Activated CD4-positive, alpha-beta T cell treated with anti-CD3 and anti-CD28 coated beads for 36 hours (primary cell): ENCODE measurements at regions of chr18 and their contacts with region 1.

Region 1: GRCh38 chr18:76803814-76804213 is 18.5 kb upstream of the ZNF236 start:
- DNase-seq: peak; percentile 83
- ATAC-seq: peak; percentile 79
- H3K4me3 Mint-ChIP-seq: no peak overlapping the region
- H3K27ac Mint-ChIP-seq: no peak overlapping the region
- H3K4me1 Mint-ChIP-seq: peaks cover 13% of the 10 kb centered on the region
- H3K27me3 Mint-ChIP-seq: peaks cover 4% of the 10 kb centered on the region

Region 2: DNA sequence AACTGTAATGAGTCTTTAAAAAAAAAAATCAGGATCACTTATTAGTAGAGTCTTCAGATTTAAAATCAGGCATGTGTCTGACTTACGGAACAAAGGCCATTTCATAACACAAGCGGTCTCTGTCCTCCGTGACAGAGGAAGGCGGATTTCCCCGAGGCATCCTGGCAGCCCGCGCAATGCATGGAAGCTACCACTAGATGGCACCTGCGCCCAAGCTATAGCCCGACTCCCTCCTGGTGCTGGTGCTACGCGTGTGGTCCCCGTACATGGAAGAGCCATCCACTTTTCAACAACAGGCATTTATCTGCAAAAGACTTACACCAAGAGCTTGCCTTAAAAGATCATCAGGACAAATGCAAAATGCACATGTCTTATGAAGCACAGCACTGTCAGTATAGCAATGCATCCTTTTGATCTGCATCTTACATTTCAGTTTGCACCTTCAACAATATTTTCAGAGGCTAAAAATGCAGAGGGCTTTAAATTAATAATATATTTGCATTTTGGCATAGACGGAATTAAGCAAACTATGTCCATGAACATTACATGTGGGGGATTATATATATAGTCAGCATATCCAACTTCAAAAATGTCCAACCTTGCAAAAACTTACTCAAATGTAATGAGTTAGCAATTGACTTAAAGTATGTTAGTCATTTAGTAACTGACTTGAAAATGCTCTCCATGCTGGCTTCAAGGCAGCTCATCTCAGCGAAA is 404.8 kb before region 1 on chr18:
- CTCF ChIA-PET with region 1: no interaction called
- POLR2A ChIA-PET with region 1: no interaction called
- intact Hi-C with region 1: loop called in 1 of 2 experiments (anchors 2 kb)
- DNase-seq: peak; percentile 87
- ATAC-seq: peak; percentile 96
- H3K4me3 Mint-ChIP-seq: no peak overlapping the region
- H3K27ac Mint-ChIP-seq: no peak overlapping the region
- H3K4me1 Mint-ChIP-seq: peaks cover 5% of the 10 kb centered on the region
- H3K27me3 Mint-ChIP-seq: no peaks in the 10 kb centered on the region

Region 3: GRCh38 chr18:76697441-76697901 is 106.3 kb before region 1 on chr18:
- CTCF ChIA-PET with region 1: no interaction called
- POLR2A ChIA-PET with region 1: no interaction called
- intact Hi-C with region 1: no loop called
- DNase-seq: no peak
- ATAC-seq: no peak
- H3K4me3 Mint-ChIP-seq: no peak overlapping the region
- H3K27ac Mint-ChIP-seq: no peak overlapping the region
- H3K4me1 Mint-ChIP-seq: peaks cover 2% of the 10 kb centered on the region
- H3K27me3 Mint-ChIP-seq: peaks cover 28% of the 10 kb centered on the region

Region 4: DNA sequence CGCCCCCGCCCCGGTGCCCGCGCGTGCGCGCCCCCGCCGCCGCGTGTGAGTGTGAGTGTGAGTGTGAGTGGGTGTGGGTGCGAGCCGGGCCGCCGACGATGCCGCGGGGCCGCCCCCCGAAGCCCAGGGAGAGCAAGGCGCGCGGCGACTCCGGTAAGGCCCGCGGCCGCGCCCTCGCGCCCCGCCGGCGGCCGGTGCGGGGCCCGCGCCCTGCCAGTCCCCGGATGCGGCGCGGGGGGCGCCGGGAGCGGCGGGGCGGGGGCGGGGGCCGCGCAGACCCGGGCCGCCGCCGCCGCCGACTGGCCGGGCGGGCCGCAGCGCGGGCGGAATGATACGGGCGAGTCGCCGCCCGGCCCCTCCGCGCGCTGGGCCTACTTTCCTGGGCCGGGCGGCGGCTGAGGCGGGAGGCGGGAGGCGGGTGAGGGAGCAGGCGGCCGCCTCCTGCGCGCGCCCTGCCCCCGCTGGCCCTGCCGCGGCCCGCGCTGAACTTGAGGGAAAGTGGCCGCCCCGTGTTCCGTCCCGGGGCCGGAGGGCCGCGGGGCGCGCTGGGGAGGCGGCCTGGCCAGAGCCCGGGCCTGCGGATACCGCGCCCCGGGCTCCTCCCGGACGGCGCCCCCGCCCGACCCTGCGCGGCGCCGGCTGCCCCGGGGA is 18.8 kb after region 1 on chr18 and contains the start of gene ZNF236:
- CTCF ChIA-PET with region 1: interaction called, 61 read pairs
- POLR2A ChIA-PET with region 1: no interaction called
- intact Hi-C with region 1: loop called (anchors 1 to 2 kb)
- DNase-seq: peak; percentile 79
- ATAC-seq: peak; percentile 51
- H3K4me3 Mint-ChIP-seq: peak within 1 kb of the TSS; percentile 91
- H3K27ac Mint-ChIP-seq: peak within 1 kb of the TSS; percentile 89
- H3K4me1 Mint-ChIP-seq: peaks cover 52% of the 10 kb centered on the region
- H3K27me3 Mint-ChIP-seq: no peaks in the 10 kb centered on the region
- total RNA-seq, gene ZNF236: 13.7 to 25.7 TPM

Region 5: GRCh38 chr18:76859474-76860339 is 55.9 kb after region 1 on chr18:
- CTCF ChIA-PET with region 1: interaction called, 9 read pairs
- POLR2A ChIA-PET with region 1: no interaction called
- intact Hi-C with region 1: loop called in 1 of 2 experiments (anchors 1 kb)
- DNase-seq: peak; percentile 63
- ATAC-seq: peak; percentile 98
- H3K4me3 Mint-ChIP-seq: peak overlapping the region; percentile 41
- H3K27ac Mint-ChIP-seq: peak overlapping the region; percentile 83
- H3K4me1 Mint-ChIP-seq: peaks cover 31% of the 10 kb centered on the region
- H3K27me3 Mint-ChIP-seq: no peaks in the 10 kb centered on the region

Region 6: DNA sequence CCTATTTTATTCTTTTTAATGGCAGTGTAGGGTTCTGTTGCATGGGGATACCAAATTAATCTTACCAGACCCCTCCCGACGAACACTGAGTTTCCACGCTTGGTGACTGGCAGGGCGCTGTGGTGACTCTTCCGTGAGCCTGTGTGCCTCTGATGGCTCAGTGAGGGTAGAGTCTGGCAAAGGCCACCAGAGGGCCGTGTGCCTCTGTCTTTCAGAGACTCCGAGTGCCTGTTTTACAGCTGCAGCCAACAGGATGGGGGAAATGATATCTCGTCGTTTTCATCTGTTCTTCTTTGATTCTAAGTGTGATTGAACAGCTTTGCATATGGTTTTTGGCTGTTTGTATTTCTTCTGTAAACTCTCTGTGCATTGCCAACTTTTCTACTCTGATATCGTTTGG is 118.3 kb after region 1 on chr18:
- CTCF ChIA-PET with region 1: interaction called, 7 read pairs
- POLR2A ChIA-PET with region 1: interaction called, 6 read pairs
- intact Hi-C with region 1: loop called (anchors 2 to 5 kb)
- DNase-seq: peak; percentile 71
- ATAC-seq: peak; percentile 97
- H3K4me3 Mint-ChIP-seq: no peak overlapping the region
- H3K27ac Mint-ChIP-seq: no peak overlapping the region
- H3K4me1 Mint-ChIP-seq: peaks cover 15% of the 10 kb centered on the region
- H3K27me3 Mint-ChIP-seq: no peaks in the 10 kb centered on the region

Region 7: DNA sequence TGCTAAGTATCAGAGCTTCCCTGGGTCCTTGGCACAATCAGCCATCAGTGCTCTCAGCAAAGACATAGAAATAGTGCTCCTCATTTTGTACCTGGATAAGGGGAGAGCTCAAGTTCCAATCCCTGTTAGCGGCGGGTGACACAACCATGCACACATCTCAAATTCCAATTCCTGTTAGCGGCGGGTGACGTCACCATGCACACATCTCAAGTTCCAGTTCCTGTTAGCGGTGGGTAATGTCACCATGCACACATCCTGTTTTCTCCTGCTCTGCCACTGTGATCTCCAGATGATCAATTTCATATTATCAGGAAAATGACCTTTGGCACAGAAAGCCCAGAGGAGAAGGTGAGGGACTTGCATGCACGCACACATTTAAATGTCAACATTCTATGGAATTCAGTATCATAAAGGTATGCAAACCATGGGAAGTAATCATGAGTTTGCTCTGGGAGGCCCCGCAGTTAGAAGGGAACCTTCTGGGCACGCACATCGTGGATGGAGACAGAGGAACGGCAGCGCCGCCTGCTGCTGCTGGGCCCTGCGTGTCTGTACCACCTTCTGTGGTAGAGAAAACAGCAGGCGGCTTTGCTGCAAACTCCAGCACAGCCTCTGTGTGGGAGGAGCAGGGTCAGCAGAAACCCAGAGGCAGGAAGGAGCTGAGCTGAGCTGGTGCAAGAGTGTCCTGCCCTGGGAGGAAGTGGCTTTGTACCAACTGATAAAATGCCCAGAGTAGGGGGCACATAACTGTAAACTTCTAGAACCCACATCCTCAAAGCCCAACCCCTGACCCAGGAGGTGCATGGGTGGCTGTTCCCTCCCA is 251.0 kb after region 1 on chr18:
- CTCF ChIA-PET with region 1: no interaction called
- POLR2A ChIA-PET with region 1: no interaction called
- intact Hi-C with region 1: loop called in 1 of 2 experiments (anchors 5 kb)
- DNase-seq: peak; percentile 90
- ATAC-seq: peak; percentile 82
- H3K4me3 Mint-ChIP-seq: peak overlapping the region; percentile 69
- H3K27ac Mint-ChIP-seq: peak overlapping the region; percentile 100
- H3K4me1 Mint-ChIP-seq: peaks cover 69% of the 10 kb centered on the region
- H3K27me3 Mint-ChIP-seq: no peaks in the 10 kb centered on the region

Region 8: GRCh38 chr18:77702686-77703085 is 898.9 kb after region 1 on chr18:
- CTCF ChIA-PET with region 1: no interaction called
- POLR2A ChIA-PET with region 1: no interaction called
- intact Hi-C with region 1: loop called in 1 of 2 experiments (anchors 5 kb)
- DNase-seq: peak; percentile 32
- ATAC-seq: no peak
- H3K4me3 Mint-ChIP-seq: no peak overlapping the region
- H3K27ac Mint-ChIP-seq: no peak overlapping the region
- H3K4me1 Mint-ChIP-seq: no peaks in the 10 kb centered on the region
- H3K27me3 Mint-ChIP-seq: peaks cover 25% of the 10 kb centered on the region